Sigmoid colon (tissue), 7 donors: ENCODE measurements at regions of chr6 and their contacts with region 1.

Region 1: DNA sequence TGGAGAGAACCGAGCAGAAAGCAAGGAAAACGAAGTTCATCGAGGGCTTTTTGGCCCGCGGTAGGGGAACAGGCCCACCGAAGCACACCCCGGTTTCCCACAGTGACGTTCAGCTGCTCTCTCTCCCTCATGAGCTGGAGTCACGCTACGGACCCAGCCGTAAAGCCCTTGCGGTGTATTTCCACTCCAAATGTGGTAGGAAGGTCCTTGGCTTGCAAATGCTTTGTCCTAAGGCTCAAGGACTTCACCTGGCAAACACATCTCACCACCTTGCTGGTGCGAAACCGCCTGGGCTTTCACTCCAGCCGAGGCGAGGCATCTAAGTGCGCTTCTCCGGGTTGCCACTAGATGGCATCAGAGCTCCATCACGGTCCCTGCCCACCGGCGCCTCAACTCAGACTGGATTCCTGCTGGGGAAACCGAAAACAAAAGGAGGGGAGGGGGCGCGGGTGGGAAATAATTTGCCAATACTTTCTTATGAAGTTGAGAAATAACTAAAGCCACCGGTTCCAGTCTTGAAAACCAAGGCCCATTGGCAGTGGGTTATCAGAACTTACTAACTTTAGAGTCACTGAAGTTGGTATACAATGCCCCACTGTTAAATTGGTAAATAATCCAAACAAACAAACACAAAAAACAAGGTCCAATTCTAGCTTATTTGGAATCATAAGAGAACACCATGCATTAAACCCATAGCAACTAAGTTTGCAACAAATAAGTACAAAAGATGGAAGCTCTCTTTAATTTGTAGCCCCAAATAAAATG is 13.4 kb upstream of the FOXC1 start:
- DNase-seq: peak; percentile 76
- H3K4me3 ChIP-seq: no peak overlapping the region
- H3K27ac ChIP-seq: no peak overlapping the region
- H3K4me1 ChIP-seq: peaks cover 0 to 7% (median 4%) of the 10 kb centered on the region in 4 donors
- H3K27me3 ChIP-seq: peaks cover 10 to 62% (median 46%) of the 10 kb centered on the region in 3 donors
- CTCF ChIP-seq: peak; percentile 80 to 96 (median 86)
- EP300 ChIP-seq: no peak
- POLR2A ChIP-seq: no peak

Region 2: GRCh38 chr6:1524040-1524480 is 72.2 kb before region 1 on chr6:
- intact Hi-C with region 1: no loop called
- DNase-seq: no peak
- H3K4me3 ChIP-seq: peak overlapping the region in 1 of 4 donors; percentile 8
- H3K27ac ChIP-seq: no peak overlapping the region
- H3K4me1 ChIP-seq: peaks cover 0 to 28% (median 21%) of the 10 kb centered on the region in 4 donors
- H3K27me3 ChIP-seq: peaks cover 4 to 26% (median 12%) of the 10 kb centered on the region in 3 donors
- CTCF ChIP-seq: peak in 3 of 4 experiments; percentile 15 to 59 (median 20)
- EP300 ChIP-seq: no peak
- POLR2A ChIP-seq: no peak

Region 3: GRCh38 chr6:1636971-1637871 is 41.0 kb after region 1 on chr6:
- intact Hi-C with region 1: no loop called
- DNase-seq: peak; percentile 52
- H3K4me3 ChIP-seq: no peak overlapping the region
- H3K27ac ChIP-seq: no peak overlapping the region
- H3K4me1 ChIP-seq: no peaks in the 10 kb centered on the region
- H3K27me3 ChIP-seq: peaks cover 0 to 8% (median 0%) of the 10 kb centered on the region in 3 donors
- CTCF ChIP-seq: no peak
- EP300 ChIP-seq: no peak
- POLR2A ChIP-seq: no peak

Region 4: DNA sequence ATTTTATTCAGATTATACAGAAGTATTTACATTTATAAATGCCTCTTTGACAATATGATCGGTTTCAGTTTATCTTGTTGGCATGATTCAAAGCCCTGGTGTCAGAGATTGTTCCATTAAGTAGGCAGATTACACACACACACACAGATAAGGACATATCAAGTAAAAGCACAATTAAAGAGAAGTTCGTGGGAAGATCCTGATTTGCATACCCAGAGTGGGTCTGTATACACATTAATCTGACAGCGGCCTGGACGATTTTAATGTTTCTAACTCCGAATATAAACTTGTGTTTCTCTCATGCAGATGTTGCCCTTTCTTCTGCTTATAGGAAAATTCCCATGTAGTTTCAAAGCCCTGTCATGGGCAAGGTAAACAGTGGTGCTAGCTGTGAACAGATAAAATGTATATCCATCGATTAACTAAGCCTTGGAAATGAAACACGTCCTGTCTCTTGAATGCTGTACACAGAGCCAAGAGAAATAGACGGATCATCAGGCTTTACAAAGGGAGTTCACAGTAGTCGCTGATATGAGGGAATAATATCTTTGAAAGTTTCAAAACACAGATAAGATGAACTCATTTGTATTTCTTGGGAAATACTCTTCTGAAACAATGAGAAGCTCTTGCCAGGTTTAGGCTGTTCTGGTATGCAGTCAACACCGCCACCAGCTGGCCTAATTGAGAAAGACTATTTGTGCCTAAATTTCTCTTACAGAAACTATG is 757.3 kb after region 1 on chr6:
- intact Hi-C with region 1: loop called (anchors 2 kb)
- DNase-seq: peak; percentile 71
- H3K4me3 ChIP-seq: no peak overlapping the region
- H3K27ac ChIP-seq: peak overlapping the region in 1 of 4 donors; percentile 18
- H3K4me1 ChIP-seq: peaks cover 0 to 14% (median 5%) of the 10 kb centered on the region in 4 donors
- H3K27me3 ChIP-seq: no peaks in the 10 kb centered on the region
- CTCF ChIP-seq: peak; percentile 58 to 78 (median 63)
- EP300 ChIP-seq: no peak
- POLR2A ChIP-seq: no peak

Region 5: GRCh38 chr6:2448820-2449571 is 852.7 kb after region 1 on chr6:
- intact Hi-C with region 1: loop called (anchors 2 kb)
- DNase-seq: no peak
- H3K4me3 ChIP-seq: peak overlapping the region in 2 of 4 donors; percentile 18 to 27
- H3K27ac ChIP-seq: no peak overlapping the region
- H3K4me1 ChIP-seq: peaks cover 0 to 6% (median 5%) of the 10 kb centered on the region in 4 donors
- H3K27me3 ChIP-seq: no peaks in the 10 kb centered on the region
- CTCF ChIP-seq: peak in 3 of 4 experiments; percentile 59 to 65 (median 61)
- EP300 ChIP-seq: no peak
- POLR2A ChIP-seq: no peak

Region 6: GRCh38 chr6:2749969-2750600 is 1153.8 kb after region 1 on chr6:
- intact Hi-C with region 1: loop called (anchors 1 kb)
- DNase-seq: no peak
- H3K4me3 ChIP-seq: no peak overlapping the region
- H3K27ac ChIP-seq: no peak overlapping the region
- H3K4me1 ChIP-seq: peaks cover 0 to 4% (median 0%) of the 10 kb centered on the region in 4 donors
- H3K27me3 ChIP-seq: no peaks in the 10 kb centered on the region
- CTCF ChIP-seq: peak; percentile 63 to 80 (median 65)
- EP300 ChIP-seq: no peak
- POLR2A ChIP-seq: no peak